ENCODE measurements at regions of chr3 and their contacts with region 1.

Region 1: GRCh38 chr3:102089904-102090492 is 240.7 kb downstream of the NFKBIZ start:
- DNase-seq: no peak
- ATAC-seq: no peak
- H3K4me3 Mint-ChIP-seq: no peak overlapping the region
- H3K27ac Mint-ChIP-seq: no peak overlapping the region
- H3K4me1 Mint-ChIP-seq: peaks cover 45% of the 10 kb centered on the region
- H3K27me3 Mint-ChIP-seq: peaks cover 5% of the 10 kb centered on the region

Region 2: DNA sequence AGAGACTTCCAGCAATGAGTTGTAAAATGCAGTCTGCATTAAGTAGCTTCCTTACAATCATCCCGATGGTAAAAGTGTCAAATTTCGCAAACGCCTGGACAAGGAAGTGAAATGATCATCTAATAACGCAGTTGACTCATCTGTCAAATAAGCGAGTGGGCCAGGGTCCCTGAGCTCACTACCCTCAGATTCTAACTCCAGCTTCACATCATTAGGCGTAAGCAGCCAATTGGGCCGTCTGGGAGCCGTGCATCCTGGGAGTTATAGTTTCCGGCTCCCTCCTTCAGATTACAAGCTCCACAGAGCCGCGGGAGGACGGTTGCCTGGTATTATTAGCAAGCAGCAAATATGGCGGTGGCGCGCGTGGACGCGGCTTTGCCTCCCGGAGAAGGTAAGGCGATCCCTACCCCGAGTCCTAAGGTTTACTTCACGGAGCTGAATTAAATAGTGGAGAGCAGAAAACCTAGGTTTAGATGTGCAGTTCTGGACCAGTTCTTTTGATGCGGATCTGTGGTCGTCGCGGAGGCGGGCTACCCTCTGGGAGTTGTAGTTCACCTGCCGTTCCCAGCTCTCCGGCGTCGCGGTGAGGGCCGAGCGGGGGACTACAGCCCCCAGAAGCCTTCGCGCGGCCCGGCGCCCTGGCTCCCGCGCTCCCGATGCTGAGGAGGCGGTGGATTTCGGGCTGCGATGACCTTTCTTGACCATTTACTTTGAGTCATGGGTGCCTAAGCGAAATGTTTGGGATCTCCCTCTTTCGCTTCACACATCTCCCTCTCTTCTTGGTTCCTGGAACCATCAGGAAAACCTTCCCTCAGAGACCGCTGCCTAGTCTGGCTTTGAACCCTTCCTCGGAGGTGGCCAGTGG is 365.4 kb before region 1 on chr3 and contains the start of gene CEP97:
- CTCF ChIA-PET with region 1: no interaction called
- POLR2A ChIA-PET with region 1: no interaction called
- intact Hi-C with region 1: loop called in 1 of 2 experiments (anchors 5 kb)
- DNase-seq: peak; percentile 95
- ATAC-seq: peak; percentile 93
- H3K4me3 Mint-ChIP-seq: peak within 1 kb of the TSS; percentile 97
- H3K27ac Mint-ChIP-seq: peak within 1 kb of the TSS; percentile 97
- H3K4me1 Mint-ChIP-seq: peaks cover 46% of the 10 kb centered on the region
- H3K27me3 Mint-ChIP-seq: no peaks in the 10 kb centered on the region
- total RNA-seq, gene CEP97: 18.1 to 20.0 TPM

Region 3: DNA sequence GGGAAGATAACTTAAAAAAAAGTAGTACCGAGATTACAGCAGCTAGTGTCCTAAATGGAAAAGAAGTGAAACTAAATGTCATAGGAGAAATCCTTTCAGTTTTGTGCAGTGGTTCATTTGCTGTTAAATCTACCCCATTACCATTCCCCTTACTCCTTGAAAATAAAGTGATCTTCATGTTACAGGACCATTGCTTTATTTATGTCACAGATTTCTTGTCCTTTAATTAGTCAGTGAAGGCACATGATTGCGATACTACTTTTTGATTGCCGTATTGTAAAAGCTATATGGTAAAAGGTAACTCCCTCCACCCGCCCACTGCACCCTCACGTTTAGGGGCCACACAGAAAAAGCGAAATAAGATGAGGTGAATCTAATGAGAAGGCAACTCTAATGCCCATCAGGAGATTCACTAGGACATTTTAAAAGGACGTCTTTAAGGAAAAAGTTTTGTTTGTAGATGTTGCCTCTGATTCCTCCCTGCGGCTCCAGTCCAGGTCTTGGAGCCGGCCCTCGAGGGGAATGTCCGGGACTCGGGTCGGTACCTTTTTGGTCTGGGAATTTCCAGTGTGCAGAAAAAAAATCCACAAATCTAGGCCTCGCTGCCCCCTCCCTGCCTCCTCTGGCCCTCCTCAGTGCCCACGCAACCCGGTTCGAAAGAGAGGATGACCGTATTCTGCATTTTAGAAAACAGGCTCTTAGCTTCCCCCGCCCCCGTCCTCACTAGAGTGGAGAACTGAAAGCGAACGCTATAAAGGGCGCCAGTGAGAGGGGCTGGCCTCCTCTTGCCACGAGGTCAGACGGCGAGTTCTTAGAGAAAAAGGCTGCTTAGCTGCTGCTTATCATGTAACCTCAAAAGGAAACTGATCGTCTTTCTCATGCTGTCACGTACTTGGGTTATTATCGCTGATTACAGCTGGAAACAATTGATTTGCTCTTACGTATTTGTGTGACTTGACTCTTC is 262.5 kb before region 1 on chr3:
- CTCF ChIA-PET with region 1: interaction called, 4 read pairs
- POLR2A ChIA-PET with region 1: interaction called, 12 read pairs
- intact Hi-C with region 1: loop called (anchors 1 kb)
- DNase-seq: peak; percentile 94
- ATAC-seq: peak; percentile 86
- H3K4me3 Mint-ChIP-seq: peak overlapping the region; percentile 77
- H3K27ac Mint-ChIP-seq: peak overlapping the region; percentile 96
- H3K4me1 Mint-ChIP-seq: peaks cover 60% of the 10 kb centered on the region
- H3K27me3 Mint-ChIP-seq: no peaks in the 10 kb centered on the region

Region 4: DNA sequence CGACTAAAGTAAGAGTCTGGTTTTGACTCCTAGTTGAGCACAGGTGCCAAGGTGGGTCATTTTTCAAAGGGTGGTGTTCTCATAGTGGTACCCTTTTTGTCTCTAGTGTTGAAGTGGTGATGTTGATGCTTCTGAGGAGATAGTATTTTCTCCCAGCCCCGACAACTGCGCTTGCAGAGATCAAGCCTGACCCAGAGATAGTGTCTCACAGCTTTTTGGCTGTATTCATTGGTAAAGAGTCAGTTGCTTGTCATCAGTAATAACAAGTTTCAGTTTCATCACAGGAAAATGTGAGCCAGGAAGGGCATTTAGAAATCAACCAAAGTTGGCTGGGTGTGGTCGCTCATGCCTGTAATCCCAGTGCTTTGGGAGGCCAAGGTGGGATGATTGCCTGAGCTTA is 101.4 kb before region 1 on chr3:
- CTCF ChIA-PET with region 1: no interaction called
- POLR2A ChIA-PET with region 1: no interaction called
- intact Hi-C with region 1: loop called (anchors 1 kb)
- DNase-seq: peak; percentile 29
- ATAC-seq: peak; percentile 74
- H3K4me3 Mint-ChIP-seq: no peak overlapping the region
- H3K27ac Mint-ChIP-seq: no peak overlapping the region
- H3K4me1 Mint-ChIP-seq: peaks cover 19% of the 10 kb centered on the region
- H3K27me3 Mint-ChIP-seq: no peaks in the 10 kb centered on the region

Region 5: GRCh38 chr3:102053375-102053989 is 36.5 kb before region 1 on chr3:
- CTCF ChIA-PET with region 1: no interaction called
- POLR2A ChIA-PET with region 1: no interaction called
- intact Hi-C with region 1: loop called in 1 of 2 experiments (anchors 2 kb)
- DNase-seq: peak; percentile 29
- ATAC-seq: peak; percentile 87
- H3K4me3 Mint-ChIP-seq: no peak overlapping the region
- H3K27ac Mint-ChIP-seq: no peak overlapping the region
- H3K4me1 Mint-ChIP-seq: peaks cover 29% of the 10 kb centered on the region
- H3K27me3 Mint-ChIP-seq: no peaks in the 10 kb centered on the region

Region 6: DNA sequence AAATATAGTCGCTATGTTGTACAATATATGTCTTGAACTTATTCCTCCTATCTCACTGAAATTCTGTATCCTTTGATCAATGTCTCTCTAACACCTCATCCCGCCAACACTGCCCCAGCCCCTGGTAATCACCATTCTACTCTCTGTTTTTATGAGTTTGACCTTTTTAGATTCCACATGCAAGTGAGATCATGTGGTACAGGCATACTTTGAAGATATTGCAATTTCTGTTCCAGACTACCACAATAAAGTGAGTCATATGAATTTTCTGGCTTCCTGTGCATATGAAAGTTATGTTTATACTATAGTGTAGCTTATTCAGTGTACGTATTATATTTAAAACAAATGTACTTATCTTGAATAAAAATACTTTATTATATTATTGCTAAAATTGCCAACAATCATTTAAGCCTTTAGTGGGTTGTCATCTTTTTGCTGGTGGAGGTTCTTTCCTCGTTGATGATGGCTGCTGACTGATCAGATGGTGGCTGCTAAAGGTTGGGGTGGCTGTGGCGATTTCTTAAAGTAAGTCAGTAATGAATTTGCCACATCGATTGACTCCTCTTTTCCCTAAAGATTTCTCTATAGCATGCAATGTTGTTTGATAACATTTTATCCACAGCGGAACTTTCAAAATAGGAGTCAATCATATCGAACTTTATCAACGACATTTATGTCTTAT is 16.6 kb after region 1 on chr3:
- CTCF ChIA-PET with region 1: interaction called, 3 read pairs
- POLR2A ChIA-PET with region 1: no interaction called
- intact Hi-C with region 1: loop called in 1 of 2 experiments (anchors 1 kb)
- DNase-seq: peak; percentile 36
- ATAC-seq: peak; percentile 90
- H3K4me3 Mint-ChIP-seq: no peak overlapping the region
- H3K27ac Mint-ChIP-seq: peak overlapping the region; percentile 58
- H3K4me1 Mint-ChIP-seq: peaks cover 19% of the 10 kb centered on the region
- H3K27me3 Mint-ChIP-seq: no peaks in the 10 kb centered on the region

Measured in activated CD4-positive, alpha-beta T cell treated with anti-CD3 and anti-CD28 coated beads for 36 hours (primary cell).